ENCODE measurements at regions of chr6 and their contacts with region 1.

Region 1: GRCh38 chr6:140586426-140587061 is 1212.1 kb upstream of the CITED2 start:
- DNase-seq: peak; percentile 79
- H3K4me3 Mint-ChIP-seq: peak overlapping the region; percentile 65
- H3K27ac Mint-ChIP-seq: peak overlapping the region; percentile 93
- H3K4me1 Mint-ChIP-seq: peaks cover 32% of the 10 kb centered on the region
- H3K27me3 Mint-ChIP-seq: no peaks in the 10 kb centered on the region

Region 2: DNA sequence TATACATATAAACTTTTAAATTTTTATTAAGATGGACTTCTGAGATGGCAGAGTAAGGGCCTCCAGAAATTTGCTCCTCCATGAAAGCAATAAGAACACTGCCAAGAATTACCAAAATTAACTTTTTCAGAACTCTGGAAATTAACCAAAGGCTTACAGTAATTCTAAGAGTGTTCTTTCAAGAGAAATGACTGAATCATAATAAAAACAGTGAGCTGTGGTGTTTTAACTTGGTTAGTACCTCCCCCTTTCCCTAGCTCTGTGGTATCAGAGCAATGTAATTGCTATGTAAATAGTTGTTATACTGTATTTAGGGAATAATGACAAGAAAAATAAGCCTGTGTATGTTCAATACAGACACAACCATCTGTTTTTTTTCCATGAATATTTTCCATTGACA is 1432.7 kb before region 1 on chr6:
- intact Hi-C with region 1: loop called (anchors 10 kb)
- DNase-seq: no peak
- H3K4me3 Mint-ChIP-seq: peak overlapping the region; percentile 61
- H3K27ac Mint-ChIP-seq: peak overlapping the region; percentile 83
- H3K4me1 Mint-ChIP-seq: peaks cover 64% of the 10 kb centered on the region
- H3K27me3 Mint-ChIP-seq: no peaks in the 10 kb centered on the region

Region 3: GRCh38 chr6:140566781-140567231 is 19.7 kb before region 1 on chr6:
- intact Hi-C with region 1: loop called (anchors 1 kb)
- DNase-seq: no peak
- H3K4me3 Mint-ChIP-seq: no peak overlapping the region
- H3K27ac Mint-ChIP-seq: no peak overlapping the region
- H3K4me1 Mint-ChIP-seq: peaks cover 13% of the 10 kb centered on the region
- H3K27me3 Mint-ChIP-seq: peaks cover 2% of the 10 kb centered on the region

Region 4: GRCh38 chr6:140599916-140600315 is 13.4 kb after region 1 on chr6:
- intact Hi-C with region 1: loop called (anchors 1 kb)
- DNase-seq: no peak
- H3K4me3 Mint-ChIP-seq: no peak overlapping the region
- H3K27ac Mint-ChIP-seq: no peak overlapping the region
- H3K4me1 Mint-ChIP-seq: peaks cover 12% of the 10 kb centered on the region
- H3K27me3 Mint-ChIP-seq: peaks cover 5% of the 10 kb centered on the region

Region 5: DNA sequence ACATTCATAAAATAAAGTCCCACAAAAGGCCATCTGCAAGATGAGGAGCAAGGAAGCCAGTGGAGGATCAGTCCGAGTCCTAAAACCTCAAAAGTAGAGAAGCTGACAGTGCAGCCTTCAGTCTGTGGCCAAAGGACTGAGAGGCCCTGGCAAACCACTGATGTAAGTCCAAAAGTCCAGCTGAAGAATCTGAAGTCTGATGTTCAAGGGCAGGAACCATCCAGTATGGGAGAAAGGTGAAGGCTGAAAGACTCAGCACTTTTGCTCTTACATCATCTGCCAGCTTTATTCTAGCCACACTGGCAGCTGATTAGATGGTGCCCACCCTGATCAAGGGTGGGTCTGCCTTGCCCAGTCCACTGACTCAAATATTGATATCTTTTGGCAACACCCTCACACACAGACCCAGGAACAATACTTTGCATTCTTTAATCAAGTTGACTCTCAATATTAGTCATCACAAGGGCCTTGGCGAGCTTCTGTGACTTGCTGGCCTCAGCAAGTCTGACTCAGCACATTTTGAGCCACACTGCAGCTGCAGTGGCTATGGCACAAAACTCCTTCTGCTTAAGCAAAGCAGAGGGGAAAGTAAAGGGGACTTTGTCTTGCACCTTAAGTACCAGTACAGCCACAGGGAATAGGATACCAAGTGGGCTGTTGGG is 158.2 kb after region 1 on chr6:
- intact Hi-C with region 1: no loop called
- DNase-seq: no peak
- H3K4me3 Mint-ChIP-seq: no peak overlapping the region
- H3K27ac Mint-ChIP-seq: no peak overlapping the region
- H3K4me1 Mint-ChIP-seq: peaks cover 3% of the 10 kb centered on the region
- H3K27me3 Mint-ChIP-seq: no peaks in the 10 kb centered on the region

Region 6: GRCh38 chr6:140774080-140774505 is 187.5 kb after region 1 on chr6:
- intact Hi-C with region 1: loop called (anchors 1 kb)
- DNase-seq: peak; percentile 61
- H3K4me3 Mint-ChIP-seq: no peak overlapping the region
- H3K27ac Mint-ChIP-seq: no peak overlapping the region
- H3K4me1 Mint-ChIP-seq: peaks cover 14% of the 10 kb centered on the region
- H3K27me3 Mint-ChIP-seq: peaks cover 11% of the 10 kb centered on the region

Region 7: GRCh38 chr6:141483598-141484061 is 897.1 kb after region 1 on chr6:
- intact Hi-C with region 1: loop called (anchors 10 kb)
- DNase-seq: peak; percentile 87
- H3K4me3 Mint-ChIP-seq: peak overlapping the region; percentile 75
- H3K27ac Mint-ChIP-seq: peak overlapping the region; percentile 94
- H3K4me1 Mint-ChIP-seq: peaks cover 35% of the 10 kb centered on the region
- H3K27me3 Mint-ChIP-seq: no peaks in the 10 kb centered on the region